CD14-positive monocyte (primary cell): ENCODE measurements at regions of chr1 and their contacts with region 1.

Region 1: DNA sequence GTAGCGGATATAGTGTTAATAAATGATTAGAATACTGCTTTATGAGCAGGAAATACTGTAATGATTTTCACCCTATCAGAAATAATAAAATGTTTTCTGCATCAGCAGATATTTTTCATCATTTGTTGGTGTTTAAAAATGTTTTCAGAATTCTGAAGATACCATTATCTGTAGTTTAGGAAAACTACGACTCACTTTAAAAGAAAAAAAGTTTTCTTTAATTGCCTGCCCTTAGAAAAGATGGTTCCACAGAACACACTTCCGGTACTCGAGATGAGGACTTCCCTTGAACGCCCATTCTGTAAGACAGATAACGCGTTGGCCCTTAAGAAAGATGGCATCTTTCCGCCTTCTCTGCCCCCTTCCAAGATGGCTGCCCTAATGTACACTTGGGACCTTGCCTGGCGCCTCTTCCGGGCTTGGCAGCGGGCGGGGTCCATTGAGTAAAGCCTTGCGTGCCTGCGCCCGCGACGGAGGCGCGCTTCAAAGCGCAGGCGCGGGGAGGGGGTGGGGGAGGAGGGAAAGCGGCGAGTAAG is at the start of gene SZRD1:
- DNase-seq: peak; percentile 99
- H3K4me3 ChIP-seq: peak within 1 kb of the TSS; percentile 78 to 98 (median 87)
- H3K4me3 Mint-ChIP-seq: peak within 1 kb of the TSS; percentile 96
- H3K27ac ChIP-seq: peak within 1 kb of the TSS; percentile 92 to 99
- H3K27ac Mint-ChIP-seq: peak within 1 kb of the TSS; percentile 98 to 100 (median 99)
- H3K4me1 ChIP-seq: peaks cover 56 to 72% of the 10 kb centered on the region in 2 donors
- H3K4me1 Mint-ChIP-seq: peaks cover 63% of the 10 kb centered on the region
- H3K27me3 ChIP-seq: no peaks in the 10 kb centered on the region
- H3K27me3 Mint-ChIP-seq: peaks cover 0 to under 1% (median 0%) of the 10 kb centered on the region in 3 donors
- CTCF ChIP-seq: no peak
- polyA plus RNA-seq, gene SZRD1: 46.4 to 50.5 (median 47.2) TPM

Region 2: DNA sequence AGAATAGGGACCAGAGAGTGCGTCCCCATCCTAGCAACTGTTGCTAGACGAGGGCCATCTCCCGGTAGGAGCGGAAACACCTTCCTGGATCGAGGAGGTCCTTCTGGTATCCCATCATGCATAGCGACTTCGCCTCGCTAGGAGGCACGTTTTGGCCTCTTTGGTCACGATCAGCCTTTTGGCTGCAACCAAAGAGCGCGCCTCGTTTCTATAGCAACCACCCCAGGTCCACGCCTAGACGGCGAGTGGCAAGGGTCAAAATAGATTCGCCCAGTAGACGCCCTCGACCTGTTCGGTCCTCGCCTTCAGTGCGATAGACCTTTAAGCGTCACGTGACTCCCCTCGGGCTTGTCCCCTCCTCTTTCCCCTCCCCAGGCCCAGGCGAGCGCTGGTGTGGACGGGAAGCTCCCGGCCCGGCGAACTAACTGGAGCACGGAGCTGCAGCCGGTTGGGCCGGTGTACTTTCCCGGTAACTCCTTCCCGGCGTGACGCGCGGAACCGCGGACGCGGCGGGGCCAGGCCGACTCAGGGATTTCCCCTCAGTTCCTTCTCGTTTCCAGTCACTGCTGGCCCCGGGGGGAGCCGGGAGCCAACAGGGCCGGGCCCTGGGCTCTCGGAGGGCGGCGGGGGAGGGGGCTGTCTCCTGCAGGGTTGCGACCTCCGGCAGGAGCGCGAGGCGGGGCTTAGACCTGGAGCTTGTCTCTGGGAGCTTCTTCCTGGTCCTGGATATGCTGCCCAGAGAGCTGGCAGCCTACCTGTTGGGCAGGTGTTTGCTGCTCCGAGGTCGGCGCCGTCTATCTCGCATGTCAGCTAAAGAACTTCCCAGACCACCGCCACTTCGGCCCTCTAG is 840.1 kb before region 1 on chr1 and contains the start of gene DNAJC16:
- intact Hi-C with region 1: loop called in 1 of 2 experiments (anchors 5 kb)
- DNase-seq: peak; percentile 99 to 100 (median 100)
- H3K4me3 ChIP-seq: peak within 1 kb of the TSS; percentile 73 to 84 (median 77)
- H3K4me3 Mint-ChIP-seq: peak within 1 kb of the TSS; percentile 85 to 91
- H3K27ac ChIP-seq: peak within 1 kb of the TSS; percentile 80 to 88
- H3K27ac Mint-ChIP-seq: peak within 1 kb of the TSS; percentile 98 to 100 (median 99)
- H3K4me1 ChIP-seq: peaks cover 29 to 43% of the 10 kb centered on the region in 2 donors
- H3K4me1 Mint-ChIP-seq: peaks cover 42% of the 10 kb centered on the region
- H3K27me3 ChIP-seq: no peaks in the 10 kb centered on the region
- H3K27me3 Mint-ChIP-seq: peaks cover 0 to 3% (median 0%) of the 10 kb centered on the region in 3 donors
- CTCF ChIP-seq: no peak
- polyA plus RNA-seq, gene DNAJC16: 5.4 to 7.8 (median 6.3) TPM

Region 3: DNA sequence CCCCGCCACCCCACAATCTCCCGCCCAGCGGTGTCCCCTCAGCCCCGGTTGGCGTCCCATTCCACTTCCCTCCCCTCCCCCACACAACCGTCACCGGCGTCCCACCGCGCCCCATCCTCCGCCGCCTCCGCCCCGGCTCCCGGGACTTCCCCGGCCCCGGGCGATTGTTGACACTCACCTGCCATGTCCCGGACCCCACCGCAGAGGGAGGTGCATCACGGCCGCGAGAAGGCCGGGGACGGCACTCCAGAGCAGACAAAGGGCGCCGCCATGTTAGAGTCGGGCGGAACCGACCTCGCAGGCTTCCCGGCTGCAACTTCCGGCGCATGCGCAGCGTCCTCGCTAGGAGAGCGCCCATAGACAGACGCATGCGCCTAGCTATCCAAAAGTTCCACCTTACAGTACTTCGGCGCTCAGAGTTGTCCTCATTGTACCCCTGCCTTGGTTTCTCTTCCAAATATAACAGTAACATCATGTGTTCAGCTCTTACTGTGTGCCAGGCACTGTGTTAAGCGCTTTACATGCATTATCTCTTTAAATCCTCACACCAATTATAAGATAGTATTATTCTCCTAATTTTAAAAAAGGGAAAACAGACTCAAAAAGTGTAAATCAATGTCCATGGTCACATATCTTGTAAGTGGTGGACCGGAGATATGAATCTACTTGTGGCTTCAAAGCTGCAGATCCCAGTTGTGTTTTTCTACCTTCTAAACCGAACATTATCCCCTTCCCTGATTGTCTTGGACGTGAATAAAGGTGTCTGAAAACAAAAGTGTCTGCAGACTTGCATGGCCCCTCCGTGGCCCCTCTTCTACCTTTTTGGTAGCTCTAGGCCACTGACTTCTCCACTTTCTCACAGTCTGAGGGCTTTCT is 390.7 kb before region 1 on chr1 and contains the start of gene ZBTB17:
- intact Hi-C with region 1: no loop called
- DNase-seq: peak; percentile 91 to 97 (median 94)
- H3K4me3 ChIP-seq: peak within 1 kb of the TSS; percentile 92 to 98 (median 95)
- H3K4me3 Mint-ChIP-seq: peak within 1 kb of the TSS; percentile 85 to 90
- H3K27ac ChIP-seq: peak within 1 kb of the TSS; percentile 30 to 80
- H3K27ac Mint-ChIP-seq: peak within 1 kb of the TSS; percentile 69 to 94 (median 89)
- H3K4me1 ChIP-seq: peaks cover 9 to 11% of the 10 kb centered on the region in 2 donors
- H3K4me1 Mint-ChIP-seq: peaks cover 20% of the 10 kb centered on the region
- H3K27me3 ChIP-seq: no peaks in the 10 kb centered on the region
- H3K27me3 Mint-ChIP-seq: no peaks in the 10 kb centered on the region
- CTCF ChIP-seq: no peak
- polyA plus RNA-seq, gene ZBTB17: 2.8 to 93.3 (median 7.6) TPM

Region 4: DNA sequence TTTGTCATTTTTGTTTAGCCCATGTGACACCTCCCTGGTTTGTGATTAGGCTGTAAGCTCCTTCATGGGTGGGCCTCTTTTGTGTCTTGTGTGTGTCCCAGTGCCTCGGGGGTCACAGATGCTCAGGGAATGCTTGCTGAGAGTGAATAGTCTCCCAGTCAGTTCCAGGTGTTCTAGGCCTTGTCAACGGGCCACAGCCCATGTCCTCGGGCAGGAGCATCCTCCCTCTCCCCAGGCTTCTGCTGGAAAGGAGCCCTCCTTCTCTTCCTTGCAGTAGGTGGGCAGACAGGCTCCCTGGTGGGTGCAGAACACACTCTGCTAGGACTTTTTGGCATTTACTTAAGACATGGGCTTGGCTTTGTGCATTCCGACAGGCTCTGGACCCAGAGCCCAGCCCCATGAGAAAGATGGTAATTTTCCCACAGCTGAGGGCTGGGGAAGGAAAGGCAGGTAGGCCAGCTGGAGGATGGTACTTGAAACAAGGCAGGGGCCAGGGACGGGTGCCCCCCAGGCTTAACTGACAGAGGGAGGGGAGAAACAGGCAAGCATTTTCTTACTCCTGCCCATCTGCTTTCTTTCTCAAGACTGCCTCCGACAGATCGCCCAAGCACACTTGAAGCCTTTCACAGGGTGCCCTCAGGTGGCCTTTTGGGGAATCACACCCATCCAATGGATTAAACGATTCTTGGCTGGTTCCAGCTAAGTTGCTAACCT is 122.7 kb before region 1 on chr1:
- intact Hi-C with region 1: loop called in 1 of 2 experiments (anchors 10 kb)
- DNase-seq: peak; percentile 35 to 67 (median 55)
- H3K4me3 ChIP-seq: no peak overlapping the region
- H3K4me3 Mint-ChIP-seq: no peak overlapping the region
- H3K27ac ChIP-seq: no peak overlapping the region
- H3K27ac Mint-ChIP-seq: no peak overlapping the region
- H3K4me1 ChIP-seq: peaks cover 6 to 8% of the 10 kb centered on the region in 2 donors
- H3K4me1 Mint-ChIP-seq: peaks cover 13% of the 10 kb centered on the region
- H3K27me3 ChIP-seq: no peaks in the 10 kb centered on the region
- H3K27me3 Mint-ChIP-seq: peaks cover 0 to 2% (median 0%) of the 10 kb centered on the region in 3 donors
- CTCF ChIP-seq: peak; percentile 87

Region 5: GRCh38 chr1:16351994-16352841 is 14.6 kb before region 1 on chr1 and contains the start of gene FBXO42:
- intact Hi-C with region 1: loop called in 1 of 2 experiments (anchors 2 kb)
- DNase-seq: peak; percentile 86 to 90 (median 88)
- H3K4me3 ChIP-seq: peak within 1 kb of the TSS; percentile 97 to 98 (median 97)
- H3K4me3 Mint-ChIP-seq: peak within 1 kb of the TSS; percentile 93 to 94
- H3K27ac ChIP-seq: peak within 1 kb of the TSS; percentile 75 to 92
- H3K27ac Mint-ChIP-seq: peak within 1 kb of the TSS; percentile 87 to 98 (median 95)
- H3K4me1 ChIP-seq: peaks cover 23 to 41% of the 10 kb centered on the region in 2 donors
- H3K4me1 Mint-ChIP-seq: peaks cover 34% of the 10 kb centered on the region
- H3K27me3 ChIP-seq: no peaks in the 10 kb centered on the region
- H3K27me3 Mint-ChIP-seq: no peaks in the 10 kb centered on the region
- CTCF ChIP-seq: peak; percentile 34
- polyA plus RNA-seq, gene FBXO42: 11.6 to 18.4 (median 16.9) TPM

Region 6: DNA sequence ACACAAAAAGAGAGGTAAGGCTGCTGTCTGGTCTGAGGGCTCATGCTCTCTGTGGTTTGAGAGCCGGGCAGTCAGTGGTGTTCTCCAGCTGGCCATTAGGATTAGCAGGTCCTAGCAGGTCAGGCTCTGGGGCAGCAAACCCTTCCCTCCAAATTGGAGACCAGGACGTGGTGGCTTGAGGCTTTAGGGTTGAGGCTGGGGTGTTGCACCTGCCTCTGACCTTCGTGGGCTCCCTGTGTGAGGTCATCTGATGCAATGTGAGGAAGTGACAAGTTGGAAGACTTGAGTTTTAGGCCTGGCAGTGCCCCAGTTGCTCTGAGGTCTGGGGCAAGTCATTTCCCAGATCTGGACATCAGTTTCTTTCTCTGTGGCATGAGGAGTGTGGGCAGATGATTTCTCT is 24.6 kb after region 1 on chr1:
- intact Hi-C with region 1: loop called in 1 of 2 experiments (anchors 2 kb)
- DNase-seq: peak; percentile 29 to 61 (median 39)
- H3K4me3 ChIP-seq: no peak overlapping the region
- H3K4me3 Mint-ChIP-seq: no peak overlapping the region
- H3K27ac ChIP-seq: peak overlapping the region; percentile 6 to 69
- H3K27ac Mint-ChIP-seq: peak overlapping the region; percentile 3 to 87 (median 74)
- H3K4me1 ChIP-seq: peaks cover 25 to 32% of the 10 kb centered on the region in 2 donors
- H3K4me1 Mint-ChIP-seq: peaks cover 44% of the 10 kb centered on the region
- H3K27me3 ChIP-seq: no peaks in the 10 kb centered on the region
- H3K27me3 Mint-ChIP-seq: peaks cover 0 to 3% (median 1%) of the 10 kb centered on the region in 3 donors
- CTCF ChIP-seq: no peak

Region 7: GRCh38 chr1:16440470-16441281 is 73.9 kb after region 1 on chr1 and contains the start of gene NECAP2:
- intact Hi-C with region 1: loop called in 1 of 2 experiments (anchors 5 kb)
- DNase-seq: peak; percentile 87
- H3K4me3 ChIP-seq: peak within 1 kb of the TSS; percentile 54 to 100 (median 100)
- H3K4me3 Mint-ChIP-seq: peak within 1 kb of the TSS; percentile 92 to 96
- H3K27ac ChIP-seq: peak within 1 kb of the TSS; percentile 99
- H3K27ac Mint-ChIP-seq: peak within 1 kb of the TSS; percentile 92 to 97 (median 94)
- H3K4me1 ChIP-seq: peaks cover 56% of the 10 kb centered on the region in 2 donors
- H3K4me1 Mint-ChIP-seq: peaks cover 59% of the 10 kb centered on the region
- H3K27me3 ChIP-seq: no peaks in the 10 kb centered on the region
- H3K27me3 Mint-ChIP-seq: peaks cover 0 to 2% (median 1%) of the 10 kb centered on the region in 3 donors
- CTCF ChIP-seq: peak; percentile 88
- polyA plus RNA-seq, gene NECAP2: 78.9 to 223 (median 183) TPM

Region 8: GRCh38 chr1:16474166-16474800 is 107.5 kb after region 1 on chr1:
- intact Hi-C with region 1: no loop called
- DNase-seq: no peak
- H3K4me3 ChIP-seq: no peak overlapping the region
- H3K4me3 Mint-ChIP-seq: no peak overlapping the region
- H3K27ac ChIP-seq: no peak overlapping the region
- H3K27ac Mint-ChIP-seq: peak overlapping the region in 1 of 7 donors; percentile 62
- H3K4me1 ChIP-seq: no peaks in the 10 kb centered on the region
- H3K4me1 Mint-ChIP-seq: no peaks in the 10 kb centered on the region
- H3K27me3 ChIP-seq: no peaks in the 10 kb centered on the region
- H3K27me3 Mint-ChIP-seq: peaks cover 0 to 2% (median 2%) of the 10 kb centered on the region in 3 donors
- CTCF ChIP-seq: no peak